ENCODE measurements at regions of chr2 and their contacts with region 1.

Region 1: GRCh38 chr2:113876503-113877387 is 13.1 kb upstream of the ACTR3 start:
- DNase-seq: peak; percentile 88
- H3K4me3 Mint-ChIP-seq: peak overlapping the region; percentile 30
- H3K27ac Mint-ChIP-seq: peak overlapping the region; percentile 86
- H3K4me1 Mint-ChIP-seq: peaks cover 69% of the 10 kb centered on the region
- H3K27me3 Mint-ChIP-seq: no peaks in the 10 kb centered on the region

Region 2: DNA sequence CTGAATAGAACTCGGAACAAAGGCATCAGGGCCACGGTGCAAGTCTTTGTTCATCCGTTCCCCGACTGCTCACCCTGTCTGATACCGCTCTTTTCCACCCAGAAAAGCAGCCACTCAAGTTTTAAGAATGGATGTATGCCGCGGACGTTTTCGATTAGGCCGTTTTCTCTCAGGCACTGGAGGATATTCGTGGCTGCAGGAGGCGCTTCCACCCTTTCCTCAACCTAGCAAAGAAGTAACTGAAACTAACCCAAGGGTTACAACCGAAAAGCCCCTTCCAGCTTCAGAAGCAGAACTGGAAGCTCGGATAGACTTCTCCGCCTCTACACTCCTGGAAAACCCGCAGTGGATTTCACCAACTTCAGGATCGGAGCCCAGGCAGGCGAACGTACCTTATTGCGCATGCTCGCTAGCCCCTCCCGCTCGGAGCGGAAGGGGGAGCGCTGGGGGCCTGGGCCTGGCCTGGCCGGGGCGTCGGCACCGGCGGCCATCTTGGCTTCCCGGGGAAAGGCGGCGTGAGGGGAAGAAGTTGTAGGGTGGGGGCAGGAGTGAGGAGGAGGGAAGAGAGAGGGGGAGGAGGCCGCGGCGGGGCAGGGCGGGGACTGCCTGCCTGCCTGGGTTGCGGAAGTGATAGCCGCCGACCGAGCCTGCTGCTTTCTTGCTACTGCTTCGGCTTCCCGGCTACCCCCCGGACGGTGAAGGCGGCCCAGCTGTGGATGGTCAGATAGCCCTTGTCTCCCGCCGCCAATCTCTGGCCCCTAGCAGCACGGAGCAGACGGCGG is 12.9 kb after region 1 on chr2 and contains the start of gene ACTR3:
- CTCF ChIA-PET with region 1: interaction called, 20 read pairs
- POLR2A ChIA-PET with region 1: interaction called, 4 read pairs
- DNase-seq: peak; percentile 99
- H3K4me3 Mint-ChIP-seq: peak within 1 kb of the TSS; percentile 100
- H3K27ac Mint-ChIP-seq: peak within 1 kb of the TSS; percentile 97
- H3K4me1 Mint-ChIP-seq: peaks cover 68% of the 10 kb centered on the region
- H3K27me3 Mint-ChIP-seq: no peaks in the 10 kb centered on the region
- total RNA-seq, gene ACTR3: 600 to 633 TPM